OCI-LY7 (cell line): ENCODE measurements at regions of chr4 and their contacts with region 1.

Region 1: DNA sequence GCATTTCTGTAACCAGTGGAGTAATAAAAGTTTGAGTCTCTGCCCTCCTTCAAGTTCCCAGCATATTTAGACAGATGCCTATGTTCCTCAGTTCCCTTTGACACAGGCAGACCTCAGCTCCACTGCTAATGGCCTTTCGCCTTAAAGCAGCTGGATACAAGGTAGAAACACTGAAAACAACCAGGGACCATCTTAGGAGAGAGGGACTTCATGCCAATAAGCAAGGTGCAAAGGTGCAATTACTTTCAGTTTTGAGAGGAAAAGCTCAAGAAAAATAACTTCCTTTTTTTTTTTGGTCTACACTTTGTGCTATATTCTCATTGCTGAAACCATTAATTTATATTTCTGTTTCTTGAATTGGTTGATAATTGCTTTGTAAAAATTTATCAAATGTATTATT is 781.9 kb upstream of the GALNTL6 start:
- DNase-seq: no peak
- H3K4me3 ChIP-seq: no peak overlapping the region
- H3K27ac ChIP-seq: no peak overlapping the region
- H3K4me1 ChIP-seq: no peaks in the 10 kb centered on the region
- CTCF ChIP-seq: no peak

Region 2: GRCh38 chr4:170872794-170873193 is 158.5 kb before region 1 on chr4:
- CTCF ChIA-PET with region 1: no interaction called
- POLR2A ChIA-PET with region 1: no interaction called
- intact Hi-C with region 1: no loop called
- DNase-seq: no peak
- H3K4me3 ChIP-seq: no peak overlapping the region
- H3K27ac ChIP-seq: no peak overlapping the region
- H3K4me1 ChIP-seq: no peaks in the 10 kb centered on the region
- CTCF ChIP-seq: no peak

Region 3: GRCh38 chr4:171042989-171043524 is 11.7 kb after region 1 on chr4:
- CTCF ChIA-PET with region 1: no interaction called
- POLR2A ChIA-PET with region 1: interaction called, 16 read pairs
- intact Hi-C with region 1: no loop called
- DNase-seq: no peak
- H3K4me3 ChIP-seq: no peak overlapping the region
- H3K27ac ChIP-seq: no peak overlapping the region
- H3K4me1 ChIP-seq: no peaks in the 10 kb centered on the region
- CTCF ChIP-seq: no peak

Region 4: DNA sequence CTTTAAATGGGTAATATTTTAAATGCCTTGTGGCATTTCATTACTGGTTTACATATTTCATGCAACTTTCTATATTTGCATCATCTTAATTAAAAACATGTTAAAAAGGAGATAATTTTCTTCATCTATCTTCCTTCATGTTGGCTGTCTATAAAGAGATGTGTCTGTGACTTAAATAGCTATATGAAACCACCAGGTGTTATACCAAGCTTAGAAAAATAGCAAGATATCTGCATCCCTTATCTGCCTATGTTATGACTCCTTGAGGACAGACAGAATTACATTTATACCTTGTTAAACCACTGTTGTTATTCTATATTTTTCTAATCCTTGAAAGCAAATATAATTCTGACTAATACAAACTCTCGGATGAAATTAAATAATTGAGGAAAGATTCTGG is 18.0 kb after region 1 on chr4:
- CTCF ChIA-PET with region 1: no interaction called
- POLR2A ChIA-PET with region 1: interaction called, 16 read pairs
- intact Hi-C with region 1: no loop called
- DNase-seq: peak; percentile 24
- H3K4me3 ChIP-seq: no peak overlapping the region
- H3K27ac ChIP-seq: no peak overlapping the region
- H3K4me1 ChIP-seq: peaks cover 15% of the 10 kb centered on the region
- CTCF ChIP-seq: no peak

Region 5: GRCh38 chr4:171334549-171334948 is 303.2 kb after region 1 on chr4:
- CTCF ChIA-PET with region 1: no interaction called
- POLR2A ChIA-PET with region 1: no interaction called
- intact Hi-C with region 1: no loop called
- DNase-seq: no peak
- H3K4me3 ChIP-seq: no peak overlapping the region
- H3K27ac ChIP-seq: no peak overlapping the region
- H3K4me1 ChIP-seq: no peaks in the 10 kb centered on the region
- CTCF ChIP-seq: no peak